Endothelial cell of umbilical vein (primary cell): ENCODE measurements at regions of chr10 and their contacts with region 1.

Region 1: DNA sequence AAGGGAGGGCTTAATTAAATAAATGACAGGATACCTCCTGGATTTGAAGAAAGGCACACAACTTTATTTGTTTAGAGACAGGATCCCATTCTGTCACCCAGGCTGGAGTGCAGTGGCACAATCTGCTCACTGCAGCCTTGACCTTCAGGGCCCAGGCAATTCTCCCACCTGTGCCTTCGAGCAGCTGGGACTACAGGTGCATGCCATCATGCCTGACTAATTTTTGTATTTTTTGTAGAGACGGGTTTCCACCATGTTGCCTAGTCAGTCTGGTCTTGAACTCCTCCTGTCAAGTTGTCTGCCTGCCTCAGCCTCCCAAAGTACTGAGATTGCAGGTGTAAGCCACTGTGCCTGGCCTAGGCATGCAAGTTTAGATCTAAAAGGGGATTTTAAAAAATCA is 272.7 kb upstream of the MBL2 start:
- DNase-seq: no peak
- H3K4me3 ChIP-seq: no peak overlapping the region
- H3K27ac ChIP-seq: no peak overlapping the region
- H3K4me1 ChIP-seq: no peaks in the 10 kb centered on the region
- H3K27me3 ChIP-seq: no peaks in the 10 kb centered on the region
- CTCF ChIP-seq: no peak
- POLR2A ChIP-seq: no peak

Region 2: DNA sequence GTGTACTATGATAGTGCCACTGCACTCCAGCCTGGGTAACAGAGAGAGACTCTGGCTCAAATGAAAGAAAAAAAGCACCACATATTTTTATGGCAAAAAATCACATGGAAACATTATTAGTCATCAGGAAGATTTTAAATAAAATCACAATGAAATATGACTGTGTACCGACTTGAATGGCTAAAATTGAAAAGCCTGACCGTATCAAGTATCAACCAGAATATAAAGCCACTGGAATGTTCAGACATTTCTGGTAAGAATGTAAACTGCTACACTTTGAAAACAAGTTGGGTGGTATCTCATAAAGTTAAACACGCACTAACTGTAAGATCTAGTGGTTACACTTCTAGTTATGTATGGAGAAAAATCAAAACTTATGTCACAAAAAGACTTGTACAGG is 34.0 kb after region 1 on chr10:
- CTCF ChIA-PET with region 1: no interaction called
- POLR2A ChIA-PET with region 1: no interaction called
- dilution Hi-C with region 1: no loop called
- intact Hi-C with region 1: loop called (anchors 1 kb)
- DNase-seq: no peak
- H3K4me3 ChIP-seq: no peak overlapping the region
- H3K27ac ChIP-seq: no peak overlapping the region
- H3K4me1 ChIP-seq: peaks cover under 1% of the 10 kb centered on the region
- H3K27me3 ChIP-seq: peaks cover 0 to 2% of the 10 kb centered on the region in 2 experiments
- CTCF ChIP-seq: no peak
- POLR2A ChIP-seq: no peak